ENCODE measurements at regions of chr16 and their contacts with region 1.

Region 1: GRCh38 chr16:1342526-1343427 is 8.9 kb downstream of the TSR3 start:
- DNase-seq: peak; percentile 99 to 100
- ATAC-seq: peak; percentile 68 to 94
- H3K4me3 ChIP-seq: peak overlapping the region; percentile 20; the same call in 1 of the 3 replicates
- H3K27ac ChIP-seq: no peak overlapping the region
- H3K4me1 ChIP-seq: peaks cover 14% of the 10 kb centered on the region
- CTCF ChIP-seq: no peak
- EP300 ChIP-seq: no peak
- POLR2A ChIP-seq: no peak
- RAD21 ChIP-seq: no peak

Region 2: DNA sequence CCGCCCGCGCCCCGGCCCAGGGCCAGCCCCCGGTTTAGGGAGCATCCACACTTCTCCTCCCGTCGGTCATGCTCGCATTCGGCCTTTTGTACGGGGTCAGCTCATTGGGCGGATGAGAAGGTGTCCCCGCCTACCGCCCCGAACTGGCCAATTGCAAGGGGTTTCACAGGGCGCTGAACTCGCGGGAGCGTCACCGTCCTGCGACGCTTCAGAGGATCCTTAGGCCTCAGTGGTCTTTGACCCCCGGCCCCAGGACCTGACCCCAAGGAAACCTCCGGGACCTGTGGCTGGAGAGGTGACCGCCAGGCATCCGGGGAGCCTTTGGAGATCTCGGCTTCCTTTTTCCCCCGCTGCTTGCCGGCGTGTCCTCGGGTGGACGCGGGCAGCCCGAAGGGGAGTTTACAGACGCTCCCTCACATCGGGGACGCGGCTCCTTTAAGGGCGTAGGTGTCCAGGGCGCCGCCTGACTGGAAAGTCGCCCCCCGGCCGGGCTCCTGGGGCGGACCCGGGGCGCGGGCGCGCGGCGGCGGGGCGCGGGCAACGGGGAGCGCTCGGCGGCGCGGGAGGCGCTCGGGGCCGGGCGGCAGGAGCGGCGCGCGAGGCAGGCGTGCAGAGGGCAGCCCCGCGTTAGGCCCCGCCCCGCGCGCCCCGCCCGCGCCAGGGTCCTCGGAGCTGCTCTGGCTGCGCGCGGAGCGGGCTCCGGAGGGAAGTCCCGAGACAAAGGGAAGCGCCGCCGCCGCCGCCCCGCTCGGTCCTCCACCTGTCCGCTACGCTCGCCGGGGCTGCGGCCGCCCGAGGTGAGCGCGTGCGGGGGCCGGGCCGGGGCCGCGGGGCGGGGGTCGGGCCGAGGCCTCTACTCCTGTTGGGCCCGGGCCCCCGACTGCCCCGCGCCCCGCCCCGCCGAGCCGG is 33.5 kb before region 1 on chr16 and contains the start of gene UBE2I:
- CTCF ChIA-PET with region 1: interaction called, 10 read pairs
- POLR2A ChIA-PET with region 1: interaction called, 3 read pairs
- DNase-seq: peak; percentile 88 to 99
- ATAC-seq: peak; percentile 80 to 93
- H3K4me3 ChIP-seq: peak within 1 kb of the TSS; percentile 80
- H3K27ac ChIP-seq: peak within 1 kb of the TSS; percentile 97 to 98
- H3K4me1 ChIP-seq: peaks cover 19% of the 10 kb centered on the region
- CTCF ChIP-seq: no peak
- EP300 ChIP-seq: no peak
- POLR2A ChIP-seq: peak; percentile 39
- RAD21 ChIP-seq: no peak
- polyA plus RNA-seq, gene UBE2I: 131 and 170 TPM in 2 replicates

Region 3: DNA sequence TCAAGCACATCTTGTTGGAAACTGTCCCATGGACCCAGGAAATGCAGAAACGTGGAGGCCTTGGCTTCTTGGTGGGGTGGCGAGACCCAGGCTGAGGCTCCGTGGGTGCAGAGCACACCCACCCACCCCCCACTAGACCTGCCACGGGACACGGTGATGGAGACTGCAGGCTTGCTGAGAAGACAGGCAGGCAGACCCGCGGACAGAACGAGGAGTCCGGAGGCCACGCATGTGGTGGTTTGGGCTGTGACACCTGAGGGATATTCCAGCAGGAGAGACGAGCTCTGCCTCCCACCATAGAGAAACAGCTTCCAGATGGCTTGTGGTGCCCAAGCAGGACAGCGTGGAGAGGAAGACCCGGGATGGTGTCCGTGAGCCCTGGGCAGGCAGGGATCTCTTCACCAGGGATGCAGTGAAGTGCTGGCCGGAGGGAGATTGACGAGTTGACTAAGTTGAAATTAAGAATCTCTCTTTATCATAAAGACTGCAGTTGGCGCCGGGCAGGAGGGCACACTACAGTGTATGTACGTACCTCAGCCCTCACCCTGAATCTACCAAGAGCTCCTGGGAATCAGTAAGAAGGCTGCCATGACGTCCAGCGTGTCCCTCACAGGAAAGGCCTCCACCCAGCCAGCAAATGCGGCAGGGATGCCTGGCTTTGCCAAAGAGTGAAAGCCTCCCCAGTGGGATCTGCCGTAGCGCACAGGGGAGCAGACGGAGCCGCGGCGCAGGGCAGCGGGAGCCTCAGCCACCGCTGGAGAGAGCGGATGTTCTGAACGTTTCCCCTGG is 25.1 kb before region 1 on chr16:
- CTCF ChIA-PET with region 1: interaction called, 44 read pairs
- POLR2A ChIA-PET with region 1: no interaction called
- DNase-seq: no peak
- ATAC-seq: no peak
- H3K4me3 ChIP-seq: no peak overlapping the region
- H3K27ac ChIP-seq: no peak overlapping the region
- H3K4me1 ChIP-seq: no peaks in the 10 kb centered on the region; the same call in 2 of the 3 replicates
- CTCF ChIP-seq: no peak
- EP300 ChIP-seq: no peak
- POLR2A ChIP-seq: no peak
- RAD21 ChIP-seq: no peak

Region 4: GRCh38 chr16:1325673-1326371 is 17.0 kb before region 1 on chr16:
- CTCF ChIA-PET with region 1: interaction called, 44 read pairs
- POLR2A ChIA-PET with region 1: interaction called, 6 read pairs
- DNase-seq: no peak
- ATAC-seq: peak; percentile 23 to 31; a peak in 5 of 6 replicates
- H3K4me3 ChIP-seq: no peak overlapping the region
- H3K27ac ChIP-seq: 0 out of 6 replicates have a peak overlapping the region, but pooled peaks of 1 of the 2 experiments have one; percentile 15
- H3K4me1 ChIP-seq: no peaks in the 10 kb centered on the region
- CTCF ChIP-seq: no peak
- EP300 ChIP-seq: no peak
- POLR2A ChIP-seq: no peak
- RAD21 ChIP-seq: no peak

Region 5: DNA sequence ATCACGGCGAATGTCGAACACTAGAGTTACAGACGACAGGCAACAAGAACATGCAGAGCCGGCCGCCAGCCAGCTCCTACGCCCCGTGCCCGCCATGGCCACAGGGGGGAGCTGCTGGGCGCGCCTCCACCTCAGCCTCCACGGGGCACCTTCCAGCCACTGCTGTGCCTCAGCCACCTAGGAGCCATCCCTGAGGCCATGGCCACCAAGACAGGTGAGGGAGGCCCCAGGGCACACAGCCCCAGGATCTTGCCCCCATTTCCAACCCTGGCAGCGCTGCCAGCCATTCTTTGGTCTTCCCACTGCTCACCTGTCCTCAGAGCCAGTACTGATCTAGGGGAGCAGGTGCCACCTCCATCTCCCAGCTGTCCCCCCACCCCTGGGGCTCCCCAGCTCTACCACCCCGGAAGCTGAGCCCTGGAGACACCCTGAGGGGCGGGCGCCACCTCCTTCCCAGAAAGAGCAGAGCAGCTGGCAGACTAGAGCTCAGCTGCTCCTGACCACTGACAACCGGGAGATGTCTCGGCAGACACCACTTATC is 20.8 kb after region 1 on chr16:
- CTCF ChIA-PET with region 1: interaction called, 78 read pairs
- POLR2A ChIA-PET with region 1: interaction called, 3 read pairs
- DNase-seq: peak; percentile 67 to 76
- ATAC-seq: peak; percentile 82 to 88
- H3K4me3 ChIP-seq: no peak overlapping the region
- H3K27ac ChIP-seq: 0 out of 6 replicates have a peak overlapping the region, but pooled peaks of 1 of the 2 experiments have one; percentile 0
- H3K4me1 ChIP-seq: peaks cover 3% of the 10 kb centered on the region
- CTCF ChIP-seq: peak; percentile 83
- EP300 ChIP-seq: no peak
- POLR2A ChIP-seq: no peak
- RAD21 ChIP-seq: peak; percentile 45 to 60